ENCODE measurements at regions of chr4 and their contacts with region 1.

Region 1: GRCh38 chr4:112231779-112232713 is at the start of gene AP1AR:
- DNase-seq: peak; percentile 74
- H3K4me3 ChIP-seq: peak within 1 kb of the TSS; percentile 71 to 99 (median 94)
- H3K27ac ChIP-seq: peak within 1 kb of the TSS; percentile 91
- H3K4me1 ChIP-seq: peaks cover 3% of the 10 kb centered on the region
- H3K27me3 ChIP-seq: no peaks in the 10 kb centered on the region
- CTCF ChIP-seq: peak; percentile 11 to 41
- total RNA-seq, gene AP1AR: 24.6 to 27.3 TPM

Region 2: GRCh38 chr4:111579767-111580166 is 652.3 kb before region 1 on chr4:
- CTCF ChIA-PET with region 1: no interaction called
- dilution Hi-C with region 1: no loop called
- in situ Hi-C with region 1: no loop called
- intact Hi-C with region 1: no loop called
- DNase-seq: no peak
- H3K4me3 ChIP-seq: no peak overlapping the region
- H3K27ac ChIP-seq: no peak overlapping the region
- H3K4me1 ChIP-seq: no peaks in the 10 kb centered on the region
- H3K27me3 ChIP-seq: no peaks in the 10 kb centered on the region
- CTCF ChIP-seq: no peak

Region 3: DNA sequence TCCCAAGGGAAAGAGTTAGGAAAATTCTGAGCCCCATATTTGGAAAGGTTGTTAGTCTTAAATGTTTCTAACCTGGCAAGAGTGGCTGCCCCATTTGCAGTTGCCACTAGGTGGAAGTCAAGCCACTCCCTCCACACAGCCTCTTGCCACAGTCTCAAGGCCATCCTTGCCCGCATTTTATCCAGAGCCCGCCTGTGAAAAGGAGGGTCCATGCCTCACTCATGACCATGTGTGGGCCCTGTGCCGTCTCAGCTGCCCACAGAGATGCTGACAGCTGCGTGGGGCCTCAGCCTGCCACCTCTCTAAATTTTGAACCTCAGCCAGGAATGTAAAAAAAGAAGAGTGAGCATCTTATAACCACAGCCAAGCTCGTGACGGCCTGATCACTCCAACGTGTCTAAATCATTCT is 288.2 kb before region 1 on chr4:
- CTCF ChIA-PET with region 1: no interaction called
- dilution Hi-C with region 1: no loop called
- in situ Hi-C with region 1: no loop called
- intact Hi-C with region 1: loop called (anchors 10 kb)
- DNase-seq: peak; percentile 46
- H3K4me3 ChIP-seq: no peak overlapping the region
- H3K27ac ChIP-seq: no peak overlapping the region
- H3K4me1 ChIP-seq: no peaks in the 10 kb centered on the region
- H3K27me3 ChIP-seq: peaks cover 4% of the 10 kb centered on the region
- CTCF ChIP-seq: peak; percentile 62 to 81

Region 4: DNA sequence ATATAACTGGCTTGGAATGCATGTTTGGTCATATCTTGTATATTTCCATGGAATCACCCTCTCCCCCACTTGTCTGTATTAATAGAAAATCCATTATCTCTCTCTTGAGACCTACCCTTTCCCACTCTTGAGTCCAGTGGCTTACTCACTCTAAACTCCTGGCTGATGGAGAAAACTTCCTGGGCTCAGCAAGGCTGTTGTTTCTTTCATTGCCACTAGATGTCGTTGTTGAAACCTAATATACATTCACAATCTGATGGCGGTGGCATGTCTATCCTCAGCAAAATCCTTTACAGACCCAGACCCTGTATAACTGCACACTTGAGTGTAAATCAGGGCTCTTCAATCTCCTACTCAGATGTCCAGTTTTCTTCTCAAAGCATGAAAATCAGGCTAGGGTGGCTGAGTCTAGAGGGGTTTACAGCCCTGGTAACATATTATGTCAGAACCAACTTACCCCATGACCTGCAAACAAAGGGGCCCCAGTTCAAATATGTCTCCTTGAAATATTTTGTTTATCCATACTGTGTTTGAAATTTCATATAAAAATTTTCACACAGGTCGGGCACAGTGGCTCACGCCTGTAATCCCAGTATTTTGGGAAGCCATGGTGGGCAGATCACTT is 156.8 kb before region 1 on chr4:
- CTCF ChIA-PET with region 1: no interaction called
- dilution Hi-C with region 1: no loop called
- in situ Hi-C with region 1: no loop called
- intact Hi-C with region 1: loop called (anchors 2 kb)
- DNase-seq: peak; percentile 59
- H3K4me3 ChIP-seq: no peak overlapping the region
- H3K27ac ChIP-seq: no peak overlapping the region
- H3K4me1 ChIP-seq: peaks cover 4% of the 10 kb centered on the region
- H3K27me3 ChIP-seq: no peaks in the 10 kb centered on the region
- CTCF ChIP-seq: peak; percentile 74 to 81

Region 5: DNA sequence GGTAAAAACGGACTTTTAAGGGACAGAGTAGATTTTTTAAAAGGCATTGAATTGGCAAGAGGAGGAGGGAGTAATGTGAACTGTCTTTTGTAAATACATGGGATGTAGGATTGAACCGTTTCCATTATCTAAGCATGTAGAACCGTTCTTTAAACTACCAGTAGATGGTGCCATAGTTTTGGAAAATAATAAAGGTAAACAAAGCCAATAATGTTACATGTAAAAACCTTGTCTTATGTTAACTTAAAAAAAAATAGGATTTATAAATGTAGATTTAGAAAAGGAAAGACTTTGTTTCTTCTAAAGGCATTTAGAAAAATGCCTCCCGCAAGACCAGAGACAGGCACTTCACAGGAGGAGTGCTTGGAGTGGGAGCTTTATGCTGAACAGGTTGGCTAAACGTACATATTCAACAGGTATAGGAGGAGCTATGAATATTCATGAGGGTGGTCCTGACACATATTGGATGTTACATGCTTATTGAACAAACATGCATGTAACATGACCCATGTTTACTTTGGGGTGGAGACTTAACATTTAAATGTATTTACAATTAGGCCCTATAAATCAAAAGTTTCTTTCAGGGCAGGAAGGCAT is 132.2 kb before region 1 on chr4:
- CTCF ChIA-PET with region 1: interaction called, 4 read pairs
- dilution Hi-C with region 1: no loop called
- in situ Hi-C with region 1: loop called (anchors 5 to 10 kb)
- intact Hi-C with region 1: loop called (anchors 1 kb)
- DNase-seq: peak; percentile 37
- H3K4me3 ChIP-seq: no peak overlapping the region
- H3K27ac ChIP-seq: no peak overlapping the region
- H3K4me1 ChIP-seq: no peaks in the 10 kb centered on the region
- H3K27me3 ChIP-seq: no peaks in the 10 kb centered on the region
- CTCF ChIP-seq: peak; percentile 55 to 56

Region 6: DNA sequence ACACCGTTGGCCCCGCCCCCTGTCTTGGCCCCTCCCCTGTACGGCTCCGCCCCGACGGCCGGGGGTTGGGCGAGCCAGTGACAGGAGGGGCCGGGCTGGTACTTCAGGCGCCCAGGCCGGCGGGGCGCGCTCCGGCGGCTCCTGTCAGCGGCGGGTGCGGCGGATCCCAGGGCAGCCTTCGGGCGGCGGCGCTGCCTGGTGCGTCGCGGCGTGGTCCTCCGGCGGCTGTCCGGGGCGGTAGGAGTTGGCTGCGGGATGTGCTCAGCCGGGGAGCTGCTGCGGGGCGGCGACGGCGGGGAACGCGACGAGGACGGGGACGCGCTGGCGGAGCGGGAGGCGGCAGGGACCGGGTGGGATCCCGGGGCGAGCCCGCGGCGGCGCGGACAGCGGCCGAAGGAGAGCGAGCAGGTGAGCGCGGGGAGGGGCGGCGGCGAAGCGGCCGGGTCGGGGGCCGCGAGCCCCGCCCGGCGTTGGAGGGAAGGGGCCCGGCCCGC is 86.7 kb before region 1 on chr4 and contains the start of gene FAM241A:
- CTCF ChIA-PET with region 1: no interaction called
- dilution Hi-C with region 1: no loop called
- in situ Hi-C with region 1: no loop called
- intact Hi-C with region 1: loop called (anchors 2 kb)
- DNase-seq: peak; percentile 79
- H3K4me3 ChIP-seq: peak within 1 kb of the TSS; percentile 68 to 85 (median 70)
- H3K27ac ChIP-seq: peak within 1 kb of the TSS; percentile 69
- H3K4me1 ChIP-seq: peaks cover 8% of the 10 kb centered on the region
- H3K27me3 ChIP-seq: no peaks in the 10 kb centered on the region
- CTCF ChIP-seq: no peak
- total RNA-seq, gene FAM241A: 5.5 to 8.1 TPM

Region 7: DNA sequence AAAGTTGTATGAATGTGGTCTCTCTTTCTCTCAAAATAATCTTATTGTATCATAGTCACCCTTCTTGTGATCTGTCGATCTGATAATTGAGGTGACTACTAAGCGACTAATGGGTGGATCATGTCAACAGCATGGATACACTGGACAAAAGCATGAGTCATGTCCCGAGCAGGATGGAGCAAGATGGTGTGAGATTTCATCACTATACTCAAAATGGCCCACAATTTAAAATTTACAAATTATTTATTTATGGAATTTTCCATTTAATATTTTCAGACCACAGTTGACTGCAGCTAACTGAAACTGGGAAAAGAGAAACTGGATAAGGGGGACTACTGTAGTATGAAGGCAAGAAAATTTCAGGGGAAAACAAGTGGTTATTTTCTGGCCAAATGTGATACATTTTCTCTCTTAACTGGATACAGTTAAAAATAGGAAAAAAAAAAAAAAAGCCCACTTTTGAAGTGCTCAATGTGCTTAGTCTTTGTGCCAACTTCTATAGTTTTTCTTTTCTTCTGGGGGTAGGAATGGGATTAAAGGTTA is 61.5 kb before region 1 on chr4:
- CTCF ChIA-PET with region 1: no interaction called
- dilution Hi-C with region 1: no loop called
- in situ Hi-C with region 1: no loop called
- intact Hi-C with region 1: loop called (anchors 1 kb)
- DNase-seq: peak; percentile 87
- H3K4me3 ChIP-seq: no peak overlapping the region
- H3K27ac ChIP-seq: peak overlapping the region; percentile 98
- H3K4me1 ChIP-seq: peaks cover 59% of the 10 kb centered on the region
- H3K27me3 ChIP-seq: no peaks in the 10 kb centered on the region
- CTCF ChIP-seq: no peak

Region 8: GRCh38 chr4:112214390-112215264 is 17.4 kb before region 1 on chr4:
- CTCF ChIA-PET with region 1: no interaction called
- dilution Hi-C with region 1: no loop called
- in situ Hi-C with region 1: no loop called
- intact Hi-C with region 1: loop called (anchors 1 kb)
- DNase-seq: peak; percentile 21
- H3K4me3 ChIP-seq: no peak overlapping the region
- H3K27ac ChIP-seq: peak overlapping the region; percentile 5
- H3K4me1 ChIP-seq: peaks cover 12% of the 10 kb centered on the region
- H3K27me3 ChIP-seq: no peaks in the 10 kb centered on the region
- CTCF ChIP-seq: peak; percentile 31 to 57

Measured in mammary epithelial cell (primary cell).